Transverse colon (tissue), 4 donors: ENCODE measurements at regions of chrX and their contacts with region 1.

Region 1: DNA sequence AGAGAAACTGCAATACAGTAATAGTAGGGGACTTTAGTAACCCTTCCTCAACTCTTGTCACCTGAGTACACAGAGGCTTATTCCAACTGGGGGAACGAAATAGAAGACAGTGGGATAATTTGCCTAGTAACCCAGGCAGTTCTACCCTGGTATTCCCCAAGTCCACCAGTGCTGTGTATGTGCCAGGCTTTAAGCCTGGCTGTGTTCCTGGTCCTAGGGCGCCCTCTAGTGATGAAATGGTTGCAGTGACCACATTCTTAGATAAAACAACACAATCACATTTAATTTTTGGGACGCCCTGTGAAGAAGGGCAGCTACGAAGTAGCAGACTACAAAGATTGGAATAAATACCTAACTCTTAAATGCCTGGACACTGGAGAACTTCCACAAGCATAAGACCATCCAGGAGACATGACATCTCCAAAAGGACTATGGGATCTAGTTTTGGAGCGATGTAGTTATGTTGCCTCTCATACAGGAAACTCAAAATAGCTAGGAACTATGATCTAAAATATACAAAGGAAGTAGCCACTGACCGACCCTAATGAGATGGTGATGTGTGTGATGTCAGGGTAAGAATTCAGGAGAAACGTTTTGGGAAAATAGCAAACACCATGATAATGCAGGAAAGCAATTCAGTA is 288.5 kb upstream of the ZCCHC13 start:
- DNase-seq: peak; percentile 63
- H3K4me3 ChIP-seq: no peak overlapping the region
- H3K27ac ChIP-seq: no peak overlapping the region
- H3K4me1 ChIP-seq: no peaks in the 10 kb centered on the region
- H3K27me3 ChIP-seq: no peaks in the 10 kb centered on the region
- CTCF ChIP-seq: peak; percentile 48 to 86 (median 61)
- EP300 ChIP-seq: no peak
- POLR2A ChIP-seq: no peak

Region 2: GRCh38 chrX:73647632-73648322 is 367.7 kb before region 1 on chrX:
- in situ Hi-C with region 1: no loop called
- intact Hi-C with region 1: no loop called
- DNase-seq: no peak
- H3K4me3 ChIP-seq: no peak overlapping the region
- H3K27ac ChIP-seq: no peak overlapping the region
- H3K4me1 ChIP-seq: no peaks in the 10 kb centered on the region
- H3K27me3 ChIP-seq: no peaks in the 10 kb centered on the region
- CTCF ChIP-seq: no peak
- EP300 ChIP-seq: no peak
- POLR2A ChIP-seq: no peak

Region 3: GRCh38 chrX:73863268-73863667 is 152.2 kb before region 1 on chrX:
- in situ Hi-C with region 1: loop called (anchors 5 to 10 kb)
- intact Hi-C with region 1: no loop called
- DNase-seq: no peak
- H3K4me3 ChIP-seq: no peak overlapping the region
- H3K27ac ChIP-seq: no peak overlapping the region
- H3K4me1 ChIP-seq: no peaks in the 10 kb centered on the region
- H3K27me3 ChIP-seq: no peaks in the 10 kb centered on the region
- CTCF ChIP-seq: no peak
- EP300 ChIP-seq: no peak
- POLR2A ChIP-seq: no peak

Region 4: DNA sequence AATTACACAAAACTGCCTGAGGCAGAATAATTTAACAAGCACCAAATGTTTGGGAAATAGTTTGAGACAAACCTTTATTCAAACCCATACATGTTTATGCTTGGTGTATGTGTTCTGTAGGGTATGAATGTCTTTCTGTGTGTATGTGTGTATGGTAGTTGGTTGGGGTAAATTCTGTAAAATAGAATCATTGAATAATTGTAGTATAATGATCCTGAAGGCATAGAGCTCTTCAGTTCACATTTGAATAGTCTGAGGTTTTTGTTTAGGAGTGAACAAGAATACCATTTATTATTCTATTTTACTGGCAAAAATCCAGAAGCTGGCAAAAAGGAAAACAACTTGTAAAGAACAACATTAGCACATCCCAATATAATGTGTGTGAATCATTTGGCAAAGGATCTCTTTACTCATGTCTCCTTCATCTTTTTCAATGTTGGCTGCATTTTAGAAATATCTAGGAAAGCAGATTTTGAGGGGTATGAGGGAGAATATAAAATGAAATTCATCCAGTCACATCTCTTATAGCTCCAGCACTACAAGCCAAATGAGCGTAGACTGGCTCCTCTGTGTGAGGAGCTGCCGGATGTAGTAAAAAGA is 92.5 kb before region 1 on chrX:
- in situ Hi-C with region 1: no loop called
- intact Hi-C with region 1: no loop called
- DNase-seq: no peak
- H3K4me3 ChIP-seq: no peak overlapping the region
- H3K27ac ChIP-seq: no peak overlapping the region
- H3K4me1 ChIP-seq: no peaks in the 10 kb centered on the region
- H3K27me3 ChIP-seq: no peaks in the 10 kb centered on the region
- CTCF ChIP-seq: no peak
- EP300 ChIP-seq: no peak
- POLR2A ChIP-seq: no peak